K562 (cell line): ENCODE measurements at regions of chr4 and their contacts with region 1.

Region 1: DNA sequence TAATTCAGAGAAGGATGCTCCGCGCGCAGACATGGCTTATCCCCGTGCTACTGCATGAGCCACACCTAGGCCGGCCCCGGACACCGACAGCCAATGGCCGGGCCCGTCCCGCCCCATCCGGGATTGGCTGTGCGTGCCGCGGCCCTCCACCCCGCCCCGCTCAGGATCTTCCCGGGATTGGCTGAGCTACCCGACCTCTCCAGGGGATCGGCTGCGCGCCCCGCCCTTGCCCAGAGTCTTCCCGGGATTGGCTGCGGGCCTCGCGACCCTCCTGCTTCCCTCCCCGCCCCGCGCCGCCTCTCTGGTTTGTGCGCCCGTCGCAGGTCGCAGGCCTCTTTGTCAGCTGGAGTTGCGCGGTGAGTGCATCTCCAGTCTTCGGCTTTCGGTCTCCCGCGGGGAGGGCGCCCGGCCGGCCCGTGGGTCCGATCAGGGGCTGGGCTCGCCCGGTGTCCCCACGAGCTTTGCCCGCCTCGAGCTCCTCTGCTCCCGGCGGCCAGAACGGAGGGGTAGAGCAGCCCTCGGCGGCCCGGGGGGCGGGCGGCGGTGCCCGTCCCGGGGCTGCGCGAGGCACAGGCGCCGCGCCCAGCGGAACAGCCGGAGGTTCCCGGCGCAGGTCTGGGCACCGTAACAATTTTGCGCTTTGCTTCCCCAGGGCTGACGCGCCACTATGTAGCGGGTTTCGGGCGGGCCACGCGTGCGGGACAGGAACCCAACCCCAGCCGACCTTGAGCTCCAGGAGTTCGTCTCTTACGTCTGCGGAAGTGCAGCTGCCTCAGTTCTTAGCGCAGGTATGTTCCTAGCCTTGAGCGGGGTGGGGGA is 38.8 kb downstream of the ERVMER34-1 start:
- DNase-seq: peak; percentile 97 to 99 (median 98)
- ATAC-seq: peak; percentile 97
- H3K4me3 ChIP-seq: peak overlapping the region; percentile 95
- H3K27ac ChIP-seq: peak overlapping the region; percentile 93
- H3K4me1 ChIP-seq: peaks cover 4 to 21% of the 10 kb centered on the region in 2 experiments; a peak in 4 of 5 replicates
- H3K27me3 ChIP-seq: no peaks in the 10 kb centered on the region; a peak in 1 of 5 replicates
- CTCF ChIP-seq: no peak
- EP300 ChIP-seq: no peak
- POLR2A ChIP-seq: peak; percentile 98
- RAD21 ChIP-seq: no peak

Region 2: GRCh38 chr4:52343595-52343994 is 368.8 kb before region 1 on chr4:
- CTCF ChIA-PET with region 1: no interaction called
- POLR2A ChIA-PET with region 1: no interaction called
- in situ Hi-C with region 1: no loop called
- intact Hi-C with region 1: no loop called
- DNase-seq: no peak
- ATAC-seq: no peak
- H3K4me3 ChIP-seq: no peak overlapping the region
- H3K27ac ChIP-seq: no peak overlapping the region
- H3K4me1 ChIP-seq: no peaks in the 10 kb centered on the region
- H3K27me3 ChIP-seq: no peaks in the 10 kb centered on the region
- CTCF ChIP-seq: no peak
- EP300 ChIP-seq: no peak
- POLR2A ChIP-seq: no peak
- RAD21 ChIP-seq: no peak

Region 3: DNA sequence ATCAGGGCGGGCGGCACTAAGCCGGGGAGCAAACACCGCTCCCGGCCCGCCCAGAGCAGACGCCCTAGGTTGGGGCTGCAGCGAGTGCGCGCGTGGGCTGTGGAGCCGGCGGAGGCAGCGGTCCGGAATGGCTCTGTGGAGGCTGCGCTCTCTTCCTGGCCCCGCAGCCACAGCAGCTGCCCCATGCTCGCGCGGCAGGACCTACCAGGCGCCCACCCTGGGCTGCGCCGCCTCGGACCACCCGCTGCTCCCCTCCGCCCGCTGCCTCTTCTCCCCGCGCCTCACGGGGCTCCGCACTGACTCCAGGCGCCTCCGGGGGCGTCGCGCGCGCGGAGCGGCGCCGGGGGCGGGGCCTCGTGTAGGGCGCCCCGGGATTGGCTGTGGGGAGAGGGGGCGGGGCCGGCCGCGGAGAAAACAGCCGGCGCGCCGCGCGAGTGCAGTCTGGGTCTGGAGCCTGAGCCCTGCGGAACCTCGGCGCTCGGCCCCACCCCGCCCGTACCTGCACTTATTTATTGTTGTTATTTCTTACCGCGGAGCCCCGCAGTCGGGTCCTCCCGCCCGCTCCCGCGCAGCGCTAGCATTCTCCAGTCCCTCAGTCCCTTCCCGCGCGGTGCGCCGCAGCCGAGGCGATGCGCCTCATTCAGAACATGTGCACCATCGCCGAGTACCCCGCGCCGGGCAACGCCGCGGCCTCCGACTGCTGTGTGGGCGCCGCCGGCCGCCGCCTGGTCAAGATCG is 149.7 kb after region 1 on chr4 and contains the start of gene RASL11B:
- CTCF ChIA-PET with region 1: no interaction called
- POLR2A ChIA-PET with region 1: no interaction called
- in situ Hi-C with region 1: no loop called
- intact Hi-C with region 1: loop called (anchors 5 kb)
- DNase-seq: peak; percentile 88 to 97 (median 96)
- ATAC-seq: peak; percentile 99
- H3K4me3 ChIP-seq: peak within 1 kb of the TSS; percentile 54
- H3K27ac ChIP-seq: no peak within 1 kb of the TSS
- H3K4me1 ChIP-seq: peaks cover 6 to 16% of the 10 kb centered on the region in 2 experiments; a peak in 4 of 5 replicates
- H3K27me3 ChIP-seq: peaks cover 4 to 6% of the 10 kb centered on the region in 2 experiments; a peak in 4 of 5 replicates
- CTCF ChIP-seq: no peak
- EP300 ChIP-seq: no peak
- POLR2A ChIP-seq: peak; percentile 50; the same call in 1 of the 2 replicates
- RAD21 ChIP-seq: no peak
- polyA plus RNA-seq, gene RASL11B: 0.24 to 0.27 TPM